SK-N-SH (cell line): ENCODE measurements at regions of chr7 and their contacts with region 1.

Region 1: GRCh38 chr7:127107601-127108007 is 145.1 kb downstream of the GRM8 start:
- DNase-seq: peak; percentile 45
- H3K4me3 ChIP-seq: no peak overlapping the region
- H3K27ac ChIP-seq: no peak overlapping the region
- H3K4me1 ChIP-seq: no peaks in the 10 kb centered on the region
- H3K27me3 ChIP-seq: no peaks in the 10 kb centered on the region
- CTCF ChIP-seq: peak; percentile 77
- EP300 ChIP-seq: no peak
- RAD21 ChIP-seq: peak; percentile 62

Region 2: GRCh38 chr7:127081539-127081938 is 26.1 kb before region 1 on chr7:
- CTCF ChIA-PET with region 1: interaction called, 11 read pairs
- POLR2A ChIA-PET with region 1: no interaction called
- DNase-seq: no peak
- H3K4me3 ChIP-seq: no peak overlapping the region
- H3K27ac ChIP-seq: no peak overlapping the region
- H3K4me1 ChIP-seq: no peaks in the 10 kb centered on the region
- H3K27me3 ChIP-seq: no peaks in the 10 kb centered on the region
- CTCF ChIP-seq: no peak
- EP300 ChIP-seq: no peak
- RAD21 ChIP-seq: no peak

Region 3: GRCh38 chr7:127093340-127093739 is 14.3 kb before region 1 on chr7:
- CTCF ChIA-PET with region 1: interaction called, 25 read pairs
- POLR2A ChIA-PET with region 1: no interaction called
- DNase-seq: no peak
- H3K4me3 ChIP-seq: no peak overlapping the region
- H3K27ac ChIP-seq: no peak overlapping the region
- H3K4me1 ChIP-seq: no peaks in the 10 kb centered on the region
- H3K27me3 ChIP-seq: no peaks in the 10 kb centered on the region
- CTCF ChIP-seq: no peak
- EP300 ChIP-seq: no peak
- RAD21 ChIP-seq: no peak